Psoas muscle (tissue), 8 donors: ENCODE measurements at regions of chr15 and their contacts with region 1.

Region 1: GRCh38 chr15:44058126-44058525 is 136.9 kb downstream of the FRMD5 start:
- DNase-seq: no peak
- ATAC-seq: no peak
- H3K4me3 ChIP-seq: no peak overlapping the region
- H3K27ac ChIP-seq: no peak overlapping the region
- H3K4me1 ChIP-seq: no peaks in the 10 kb centered on the region
- H3K27me3 ChIP-seq: peaks cover 0 to 3% (median 0%) of the 10 kb centered on the region in 3 donors
- CTCF ChIP-seq: no peak

Region 2: DNA sequence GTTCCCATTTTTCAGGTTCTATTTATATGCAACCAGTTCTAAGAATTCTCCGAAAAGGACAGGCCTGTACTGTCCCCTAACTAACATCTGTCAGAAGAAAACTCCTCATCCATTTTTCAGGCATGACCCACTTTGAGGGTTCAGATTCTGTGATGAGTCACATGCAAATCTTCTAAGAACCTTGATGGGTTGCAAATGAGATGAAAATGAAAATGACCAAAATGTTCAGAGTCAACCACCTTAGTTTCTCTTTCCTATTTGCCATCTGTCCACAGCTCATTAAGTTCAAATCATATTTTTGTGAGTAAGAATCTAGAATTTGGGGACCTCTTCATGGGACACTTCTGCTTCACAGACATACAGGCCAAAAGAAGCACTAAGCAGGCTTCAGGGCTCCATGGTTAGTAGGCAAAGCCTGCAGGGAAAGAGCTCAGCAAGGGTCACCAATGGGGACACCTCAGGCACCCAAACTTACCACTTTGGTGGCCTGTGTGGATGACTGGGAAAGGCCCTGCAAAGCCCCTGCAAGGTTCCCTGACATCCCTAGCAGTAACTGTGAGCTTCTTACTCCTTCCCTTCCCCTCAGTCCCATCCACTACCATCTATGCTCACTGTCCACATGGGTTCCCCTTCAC is 109.3 kb before region 1 on chr15:
- intact Hi-C with region 1: no loop called
- DNase-seq: no peak
- ATAC-seq: no peak
- H3K4me3 ChIP-seq: no peak overlapping the region
- H3K27ac ChIP-seq: no peak overlapping the region
- H3K4me1 ChIP-seq: no peaks in the 10 kb centered on the region
- H3K27me3 ChIP-seq: no peaks in the 10 kb centered on the region
- CTCF ChIP-seq: no peak

Region 3: GRCh38 chr15:43958861-43959330 is 99.2 kb before region 1 on chr15:
- intact Hi-C with region 1: no loop called
- DNase-seq: no peak
- ATAC-seq: no peak
- H3K4me3 ChIP-seq: no peak overlapping the region
- H3K27ac ChIP-seq: no peak overlapping the region
- H3K4me1 ChIP-seq: no peaks in the 10 kb centered on the region
- H3K27me3 ChIP-seq: no peaks in the 10 kb centered on the region
- CTCF ChIP-seq: no peak

Region 4: DNA sequence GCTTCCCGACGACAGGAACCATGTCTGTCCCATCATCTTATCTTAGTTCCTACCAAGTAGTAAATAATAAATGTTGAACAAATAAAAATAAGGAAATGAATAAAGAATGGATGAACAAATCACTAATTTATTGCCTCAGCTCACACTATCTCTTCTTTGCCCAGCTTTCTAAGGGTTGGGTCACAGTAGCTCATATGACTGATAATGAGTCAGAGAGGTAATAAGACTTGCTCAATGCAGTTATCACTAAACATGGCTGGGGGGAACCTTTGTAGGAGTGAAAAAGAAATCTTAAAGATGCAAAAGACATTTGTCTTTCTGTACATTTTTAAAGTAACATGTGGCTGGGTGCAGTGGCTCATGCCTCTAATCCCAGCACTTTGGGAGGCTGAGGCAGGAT is 49.1 kb before region 1 on chr15:
- intact Hi-C with region 1: loop called in 1 of 2 experiments (anchors 10 kb)
- DNase-seq: no peak
- ATAC-seq: no peak
- H3K4me3 ChIP-seq: no peak overlapping the region
- H3K27ac ChIP-seq: no peak overlapping the region
- H3K4me1 ChIP-seq: no peaks in the 10 kb centered on the region
- H3K27me3 ChIP-seq: no peaks in the 10 kb centered on the region
- CTCF ChIP-seq: no peak

Region 5: GRCh38 chr15:44137750-44138149 is 79.6 kb after region 1 on chr15:
- intact Hi-C with region 1: no loop called
- DNase-seq: no peak
- ATAC-seq: no peak
- H3K4me3 ChIP-seq: no peak overlapping the region
- H3K27ac ChIP-seq: no peak overlapping the region
- H3K4me1 ChIP-seq: no peaks in the 10 kb centered on the region
- H3K27me3 ChIP-seq: peaks cover 0 to 3% (median 2%) of the 10 kb centered on the region in 3 donors
- CTCF ChIP-seq: no peak

Region 6: GRCh38 chr15:44231842-44232241 is 173.7 kb after region 1 on chr15:
- intact Hi-C with region 1: no loop called
- DNase-seq: no peak
- ATAC-seq: no peak
- H3K4me3 ChIP-seq: no peak overlapping the region
- H3K27ac ChIP-seq: no peak overlapping the region
- H3K4me1 ChIP-seq: no peaks in the 10 kb centered on the region
- H3K27me3 ChIP-seq: no peaks in the 10 kb centered on the region
- CTCF ChIP-seq: no peak